Activated T-helper 1 cell treated with anti-CD3 and anti-CD28 coated beads, Interleukin-12 subunit alpha, Interleukin-12 subunit beta, Interleukin-2, Interleukin-4 antibody, amounts not matched to agents 30 ng/mL and 10 ng/mL and 1 ng/mL, durations not matched to agents 14 hours and 24 hours and 36 hours (primary cell): ENCODE measurements at regions of chr9 and their contacts with region 1.

Region 1: DNA sequence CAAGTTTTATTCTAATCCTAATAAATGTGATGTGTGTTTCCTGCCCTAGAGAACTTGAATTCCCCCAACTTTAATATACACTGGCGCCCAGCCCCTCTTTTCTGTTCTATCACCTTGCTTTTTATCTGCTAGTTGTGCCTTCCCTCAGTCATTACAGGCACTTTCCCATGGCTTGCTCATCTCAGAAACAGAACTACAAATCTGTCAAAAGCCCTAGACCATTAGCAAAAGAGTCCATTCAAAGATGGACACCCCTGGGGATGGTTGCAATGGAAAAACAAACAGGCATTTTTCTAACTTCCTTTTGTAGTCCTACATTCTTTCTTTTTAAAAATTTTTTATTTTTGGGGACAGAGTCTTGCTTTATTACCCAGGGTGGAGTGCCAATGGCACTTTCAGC is 48.2 kb downstream of the FRMD3 start:
- DNase-seq: no peak
- H3K4me3 Mint-ChIP-seq: no peak overlapping the region
- H3K27ac Mint-ChIP-seq: no peak overlapping the region
- H3K4me1 Mint-ChIP-seq: no peaks in the 10 kb centered on the region
- H3K27me3 Mint-ChIP-seq: peaks cover 9% of the 10 kb centered on the region

Region 2: GRCh38 chr9:83521411-83521810 is 31.4 kb after region 1 on chr9:
- intact Hi-C with region 1: no loop called
- DNase-seq: no peak
- H3K4me3 Mint-ChIP-seq: no peak overlapping the region
- H3K27ac Mint-ChIP-seq: no peak overlapping the region
- H3K4me1 Mint-ChIP-seq: no peaks in the 10 kb centered on the region
- H3K27me3 Mint-ChIP-seq: peaks cover 5% of the 10 kb centered on the region

Region 3: GRCh38 chr9:83536332-83536731 is 46.4 kb after region 1 on chr9:
- intact Hi-C with region 1: no loop called
- DNase-seq: no peak
- H3K4me3 Mint-ChIP-seq: no peak overlapping the region
- H3K27ac Mint-ChIP-seq: no peak overlapping the region
- H3K4me1 Mint-ChIP-seq: no peaks in the 10 kb centered on the region
- H3K27me3 Mint-ChIP-seq: peaks cover 54% of the 10 kb centered on the region

Region 4: DNA sequence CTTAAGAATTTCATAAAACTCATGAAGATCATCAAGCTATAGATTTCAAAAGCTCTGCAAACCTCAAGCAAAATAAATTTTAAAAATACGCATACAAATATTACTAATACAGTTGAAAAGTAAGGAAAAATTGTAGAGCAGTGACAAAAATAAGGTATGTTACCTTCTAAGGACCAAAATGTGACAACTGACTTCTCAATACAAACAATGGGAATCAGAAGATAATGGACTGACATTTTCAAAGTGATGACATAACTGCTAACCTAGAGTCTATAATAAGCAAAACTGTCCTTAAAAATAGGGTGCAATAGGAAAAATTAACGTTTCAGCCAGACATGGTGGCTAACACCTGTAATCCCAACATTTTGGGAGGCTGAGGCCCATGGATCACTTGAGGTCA is 517.7 kb after region 1 on chr9:
- intact Hi-C with region 1: loop called (anchors 5 kb)
- DNase-seq: no peak
- H3K4me3 Mint-ChIP-seq: no peak overlapping the region
- H3K27ac Mint-ChIP-seq: no peak overlapping the region
- H3K4me1 Mint-ChIP-seq: peaks cover under 1% of the 10 kb centered on the region
- H3K27me3 Mint-ChIP-seq: no peaks in the 10 kb centered on the region

Region 5: GRCh38 chr9:84079994-84080393 is 590.0 kb after region 1 on chr9:
- intact Hi-C with region 1: no loop called
- DNase-seq: no peak
- H3K4me3 Mint-ChIP-seq: no peak overlapping the region
- H3K27ac Mint-ChIP-seq: no peak overlapping the region
- H3K4me1 Mint-ChIP-seq: no peaks in the 10 kb centered on the region
- H3K27me3 Mint-ChIP-seq: peaks cover 8% of the 10 kb centered on the region